ENCODE measurements at regions of chr1 and their contacts with region 1.

Region 1: GRCh38 chr1:78004719-78005447 is at the start of gene DNAJB4:
- DNase-seq: peak; percentile 75
- CTCF ChIP-seq: no peak

Region 2: GRCh38 chr1:78619803-78620579 is 615.1 kb after region 1 on chr1 and contains the start of gene IFI44L:
- in situ Hi-C with region 1: loop called (anchors 10 kb)
- DNase-seq: no peak
- CTCF ChIP-seq: no peak

Measured in GM13976 (cell line).